Activated naive CD4-positive, alpha-beta T cell treated with anti-CD3 and anti-CD28 coated beads, Interleukin-2, amount 10 ng/mL, durations not matched to agents 7 days and 5 days (primary cell): ENCODE measurements at regions of chr20 and their contacts with region 1.

Region 1: DNA sequence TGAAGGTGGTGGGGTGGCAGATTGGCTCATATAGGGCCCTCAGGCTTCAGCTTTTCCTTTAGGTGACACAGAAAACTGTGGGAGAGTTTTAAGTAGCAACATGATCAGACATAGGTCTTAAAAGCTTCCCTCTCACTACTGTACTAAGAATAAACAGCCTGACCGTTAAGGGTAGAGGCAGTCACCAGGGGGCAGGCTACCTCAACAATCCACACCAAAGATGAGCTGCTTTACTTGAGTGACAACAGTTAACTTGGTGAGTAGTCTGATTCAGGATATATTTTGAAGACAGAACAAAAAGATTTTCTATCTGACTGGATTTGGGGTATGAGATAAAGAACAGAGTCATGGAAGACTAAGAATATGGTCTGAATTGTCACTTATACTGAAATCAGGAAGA is 193.1 kb upstream of the SHLD1 start:
- DNase-seq: peak; percentile 75
- H3K4me3 Mint-ChIP-seq: no peak overlapping the region
- H3K27ac Mint-ChIP-seq: no peak overlapping the region
- H3K4me1 Mint-ChIP-seq: peaks cover 1% of the 10 kb centered on the region
- H3K27me3 Mint-ChIP-seq: no peaks in the 10 kb centered on the region

Region 2: DNA sequence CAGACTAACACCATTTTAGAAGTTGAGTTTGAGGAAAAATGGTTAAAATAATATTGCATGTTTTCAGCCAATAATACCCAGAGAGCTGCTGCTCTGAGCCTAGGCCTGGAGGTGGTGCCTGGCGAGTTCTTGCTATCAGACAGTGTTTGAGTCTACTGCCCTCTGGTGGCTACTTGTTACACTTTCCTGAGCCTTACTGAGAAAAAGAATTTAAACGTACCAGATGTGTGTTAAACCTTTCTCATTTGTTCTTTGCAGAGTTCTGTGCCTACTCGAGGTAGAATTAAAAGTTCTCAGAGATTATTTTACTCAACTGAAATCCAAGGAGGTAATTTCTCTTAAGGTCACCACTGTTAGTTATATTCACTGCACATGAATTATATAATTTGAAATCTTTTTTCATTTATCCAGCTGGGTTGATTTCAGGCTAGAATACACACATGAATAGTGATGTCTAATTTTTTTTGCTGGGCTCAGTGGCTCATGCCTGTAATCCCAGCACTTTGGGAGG is 231.3 kb after region 1 on chr20:
- CTCF ChIA-PET with region 1: interaction called, 31 read pairs
- DNase-seq: peak; percentile 85
- H3K4me3 Mint-ChIP-seq: no peak overlapping the region
- H3K27ac Mint-ChIP-seq: peak overlapping the region; percentile 13
- H3K4me1 Mint-ChIP-seq: peaks cover 2% of the 10 kb centered on the region
- H3K27me3 Mint-ChIP-seq: no peaks in the 10 kb centered on the region